A549 (cell line): ENCODE measurements at regions of chr1 and their contacts with region 1.

Region 1: DNA sequence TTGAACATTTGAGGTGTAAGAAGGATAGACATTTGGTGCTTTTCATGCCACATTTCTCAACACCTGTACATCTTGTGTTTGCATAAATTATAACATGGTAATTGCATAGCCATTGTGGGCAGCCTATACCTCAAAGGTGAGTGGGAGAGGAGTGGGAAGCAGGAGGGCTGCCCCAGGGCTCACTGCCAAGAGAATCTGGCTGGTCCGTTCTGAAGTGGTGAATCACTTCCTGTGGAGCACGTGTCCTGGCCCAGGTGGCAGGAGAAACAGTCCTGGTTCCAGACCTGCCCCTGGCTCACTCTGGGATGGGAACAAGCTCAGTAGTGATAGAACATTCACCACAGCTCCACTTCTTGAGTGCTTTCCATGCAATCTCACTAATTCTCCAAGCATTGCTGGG is 11.6 kb upstream of the OLFML2B start:
- DNase-seq: no peak
- ATAC-seq: no peak
- H3K4me3 ChIP-seq: no peak overlapping the region
- H3K27ac ChIP-seq: no peak overlapping the region
- H3K4me1 ChIP-seq: peaks cover 6% of the 10 kb centered on the region; the same call in 2 of the 3 replicates
- CTCF ChIP-seq: no peak
- EP300 ChIP-seq: no peak
- POLR2A ChIP-seq: no peak
- RAD21 ChIP-seq: no peak

Region 2: DNA sequence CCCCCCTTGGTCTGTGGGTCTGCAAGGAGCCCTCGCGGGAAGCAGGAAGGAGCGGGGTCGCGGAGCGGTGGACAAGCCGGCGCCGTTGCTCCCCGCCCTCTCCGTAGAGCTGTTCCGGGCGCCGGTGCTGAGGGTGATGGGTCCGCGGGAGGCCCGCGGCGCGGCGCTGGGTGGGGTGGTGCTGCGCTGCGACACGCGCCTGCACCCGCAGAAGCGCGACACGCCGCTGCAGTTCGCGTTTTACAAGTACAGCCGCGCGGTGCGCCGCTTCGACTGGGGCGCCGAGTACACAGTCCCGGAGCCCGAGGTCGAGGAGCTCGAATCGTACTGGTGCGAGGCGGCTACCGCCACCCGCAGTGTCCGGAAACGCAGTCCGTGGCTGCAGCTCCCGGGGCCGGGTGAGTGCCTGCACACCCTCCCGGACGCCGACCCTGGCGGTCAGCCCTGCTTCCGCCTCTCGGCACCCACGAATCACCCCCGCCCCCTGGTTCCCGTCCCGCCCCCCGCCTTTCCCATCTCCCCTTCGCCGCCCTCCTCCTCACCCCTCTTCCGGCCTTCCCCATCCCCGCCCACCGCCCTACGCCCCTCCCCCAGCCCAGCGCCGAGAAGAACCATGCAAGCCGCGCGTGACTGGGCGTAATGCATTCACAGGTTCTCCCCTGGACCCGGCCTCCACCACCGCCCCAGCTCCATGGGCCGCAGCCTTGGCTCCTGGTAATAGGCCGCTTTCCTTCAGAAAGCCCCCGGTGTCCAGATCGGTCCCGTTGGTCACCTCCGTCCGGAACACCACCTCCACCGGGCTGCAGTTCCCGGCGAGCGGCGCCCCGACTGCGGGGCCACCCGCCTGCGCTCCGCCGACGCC is 308.4 kb before region 1 on chr1:
- CTCF ChIA-PET with region 1: no interaction called
- POLR2A ChIA-PET with region 1: no interaction called
- DNase-seq: peak; percentile 76 to 89
- ATAC-seq: peak; percentile 82 to 86
- H3K4me3 ChIP-seq: peak overlapping the region; percentile 73
- H3K27ac ChIP-seq: peak overlapping the region; percentile 90 to 97
- H3K4me1 ChIP-seq: peaks cover 15% of the 10 kb centered on the region; the same call in 2 of the 3 replicates
- CTCF ChIP-seq: no peak
- EP300 ChIP-seq: no peak
- POLR2A ChIP-seq: peak; percentile 96
- RAD21 ChIP-seq: no peak

Region 3: DNA sequence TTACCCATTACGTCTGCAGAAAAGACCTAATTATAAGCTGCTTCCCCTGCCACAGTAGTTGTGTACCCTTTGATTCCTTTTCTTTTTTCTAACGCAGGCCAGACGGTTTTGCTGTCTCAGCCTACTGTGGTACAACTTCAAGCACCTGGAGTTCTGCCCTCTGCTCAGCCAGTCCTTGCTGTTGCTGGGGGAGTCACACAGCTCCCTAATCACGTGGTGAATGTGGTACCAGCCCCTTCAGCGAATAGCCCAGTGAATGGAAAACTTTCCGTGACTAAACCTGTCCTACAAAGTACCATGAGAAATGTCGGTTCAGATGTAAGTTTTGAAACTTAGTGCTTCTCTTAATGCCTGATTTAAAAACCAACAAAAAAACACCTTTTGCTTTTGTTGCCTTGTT is 233.3 kb before region 1 on chr1:
- CTCF ChIA-PET with region 1: interaction called, 262 read pairs
- POLR2A ChIA-PET with region 1: interaction called, 3 read pairs
- DNase-seq: no peak
- ATAC-seq: no peak
- H3K4me3 ChIP-seq: no peak overlapping the region
- H3K27ac ChIP-seq: no peak overlapping the region
- H3K4me1 ChIP-seq: no peaks in the 10 kb centered on the region
- CTCF ChIP-seq: no peak
- EP300 ChIP-seq: no peak
- POLR2A ChIP-seq: no peak
- RAD21 ChIP-seq: no peak

Region 4: GRCh38 chr1:162023547-162024501 is 11.4 kb before region 1 on chr1 and contains the start of gene OLFML2B:
- CTCF ChIA-PET with region 1: interaction called, 21 read pairs
- POLR2A ChIA-PET with region 1: no interaction called
- DNase-seq: peak; percentile 70 to 84
- ATAC-seq: peak; percentile 96 to 97
- H3K4me3 ChIP-seq: peak within 1 kb of the TSS; percentile 68
- H3K27ac ChIP-seq: peak within 1 kb of the TSS; percentile 53 to 80; a peak in 5 of 6 replicates
- H3K4me1 ChIP-seq: peaks cover 5% of the 10 kb centered on the region
- CTCF ChIP-seq: peak; percentile 45
- EP300 ChIP-seq: no peak
- POLR2A ChIP-seq: no peak
- RAD21 ChIP-seq: peak; percentile 48 to 61
- polyA plus RNA-seq, gene OLFML2B: 0.10 and 0.21 TPM in 2 replicates